HepG2 (cell line): ENCODE measurements at regions of chr3 and their contacts with region 1.

Region 1: DNA sequence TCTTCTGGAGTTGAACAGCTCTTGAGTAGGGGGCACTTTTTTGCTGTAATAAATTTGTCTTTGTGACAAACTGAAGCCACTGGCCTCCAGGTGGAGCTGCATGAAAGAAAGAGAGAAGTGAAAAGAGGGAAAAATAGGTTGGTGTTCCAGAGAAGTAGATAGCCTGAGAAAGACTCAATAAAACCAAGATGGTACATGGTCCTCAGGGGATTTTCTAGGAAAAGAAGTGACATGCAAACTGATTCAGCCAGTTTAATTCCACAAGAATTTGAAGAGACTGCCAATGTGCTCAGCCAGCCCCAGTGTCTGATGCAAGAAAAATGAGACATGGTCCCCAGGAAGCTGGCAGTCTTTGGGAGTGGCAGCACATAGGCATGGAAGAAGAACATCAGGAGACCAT is 152.7 kb downstream of the CD47 start:
- DNase-seq: peak; percentile 4
- ATAC-seq: no peak
- H3K4me3 ChIP-seq: no peak overlapping the region
- H3K27ac ChIP-seq: no peak overlapping the region
- H3K4me1 ChIP-seq: no peaks in the 10 kb centered on the region
- H3K27me3 ChIP-seq: peaks cover 1 to 20% of the 10 kb centered on the region in 2 experiments; a peak in 2 of 5 replicates
- CTCF ChIP-seq: peak; percentile 39; the same call in 1 of the 2 replicates
- EP300 ChIP-seq: no peak
- POLR2A ChIP-seq: no peak
- RAD21 ChIP-seq: no peak

Region 2: GRCh38 chr3:108145578-108145977 is 207.4 kb after region 1 on chr3:
- CTCF ChIA-PET with region 1: no interaction called
- POLR2A ChIA-PET with region 1: no interaction called
- in situ Hi-C with region 1: no loop called
- intact Hi-C with region 1: loop called (anchors 10 kb)
- DNase-seq: no peak
- ATAC-seq: no peak
- H3K4me3 ChIP-seq: no peak overlapping the region
- H3K27ac ChIP-seq: no peak overlapping the region
- H3K4me1 ChIP-seq: no peaks in the 10 kb centered on the region
- H3K27me3 ChIP-seq: no peaks in the 10 kb centered on the region
- CTCF ChIP-seq: no peak
- EP300 ChIP-seq: no peak
- POLR2A ChIP-seq: no peak
- RAD21 ChIP-seq: no peak

Region 3: DNA sequence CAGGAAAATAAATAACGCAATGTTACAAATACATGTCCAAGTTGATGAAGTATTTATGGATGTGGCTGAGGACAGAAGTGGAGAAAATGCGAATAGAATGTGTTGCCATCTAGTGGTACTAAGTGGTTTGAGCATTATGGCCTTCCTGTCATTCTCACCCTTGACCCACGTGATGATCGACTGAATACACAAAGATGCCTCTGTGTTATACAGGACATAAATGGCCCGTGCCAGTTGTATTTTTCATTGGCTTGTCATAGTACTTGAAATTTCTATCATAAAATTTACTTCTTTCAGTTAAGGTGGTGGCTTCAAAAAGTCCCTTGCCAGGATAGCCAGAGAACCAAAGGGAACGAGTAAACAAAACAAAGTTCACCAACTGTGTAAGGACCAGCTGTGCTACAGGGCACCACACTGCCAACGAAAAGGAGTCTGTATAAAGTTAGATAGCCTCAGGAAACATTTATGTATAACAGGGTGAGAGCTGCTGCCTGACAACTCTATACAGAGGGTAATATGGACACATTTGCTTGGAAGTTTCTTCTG is 468.6 kb after region 1 on chr3:
- CTCF ChIA-PET with region 1: no interaction called
- POLR2A ChIA-PET with region 1: no interaction called
- in situ Hi-C with region 1: loop called (anchors 10 kb)
- intact Hi-C with region 1: loop called (anchors 5 kb)
- DNase-seq: peak; percentile 71
- ATAC-seq: peak; percentile 99
- H3K4me3 ChIP-seq: no peak overlapping the region
- H3K27ac ChIP-seq: no peak overlapping the region
- H3K4me1 ChIP-seq: peaks cover 8% of the 10 kb centered on the region
- H3K27me3 ChIP-seq: peaks cover 0 to 4% of the 10 kb centered on the region in 2 experiments; a peak in 2 of 5 replicates
- CTCF ChIP-seq: peak; percentile 82
- EP300 ChIP-seq: no peak
- POLR2A ChIP-seq: no peak
- RAD21 ChIP-seq: peak; percentile 68